CD8-positive, alpha-beta T cell (primary cell): ENCODE measurements at regions of chr15 and their contacts with region 1.

Region 1: GRCh38 chr15:74842581-74843444 is at the start of gene ULK3:
- DNase-seq: peak; percentile 88 to 96 (median 92)
- ATAC-seq: peak; percentile 92
- H3K4me3 ChIP-seq: peak within 1 kb of the TSS; percentile 90 to 97
- H3K4me3 Mint-ChIP-seq: peak within 1 kb of the TSS; percentile 91
- H3K27ac ChIP-seq: peak within 1 kb of the TSS; percentile 72 to 78
- H3K27ac Mint-ChIP-seq: peak within 1 kb of the TSS; percentile 93
- H3K4me1 ChIP-seq: peaks cover 43% of the 10 kb centered on the region
- H3K4me1 Mint-ChIP-seq: peaks cover 48% of the 10 kb centered on the region
- H3K27me3 ChIP-seq: no peaks in the 10 kb centered on the region
- H3K27me3 Mint-ChIP-seq: no peaks in the 10 kb centered on the region
- CTCF ChIP-seq: peak; percentile 71
- total RNA-seq, gene ULK3: 34.3 to 35.1 TPM

Region 2: GRCh38 chr15:74422650-74423430 is 420.0 kb before region 1 on chr15:
- CTCF ChIA-PET with region 1: no interaction called
- POLR2A ChIA-PET with region 1: no interaction called
- intact Hi-C with region 1: no loop called
- DNase-seq: no peak
- ATAC-seq: no peak
- H3K4me3 ChIP-seq: no peak overlapping the region
- H3K4me3 Mint-ChIP-seq: no peak overlapping the region
- H3K27ac ChIP-seq: no peak overlapping the region
- H3K27ac Mint-ChIP-seq: no peak overlapping the region
- H3K4me1 ChIP-seq: peaks cover 8% of the 10 kb centered on the region
- H3K4me1 Mint-ChIP-seq: peaks cover 23% of the 10 kb centered on the region
- H3K27me3 ChIP-seq: no peaks in the 10 kb centered on the region
- H3K27me3 Mint-ChIP-seq: no peaks in the 10 kb centered on the region
- CTCF ChIP-seq: no peak

Region 3: DNA sequence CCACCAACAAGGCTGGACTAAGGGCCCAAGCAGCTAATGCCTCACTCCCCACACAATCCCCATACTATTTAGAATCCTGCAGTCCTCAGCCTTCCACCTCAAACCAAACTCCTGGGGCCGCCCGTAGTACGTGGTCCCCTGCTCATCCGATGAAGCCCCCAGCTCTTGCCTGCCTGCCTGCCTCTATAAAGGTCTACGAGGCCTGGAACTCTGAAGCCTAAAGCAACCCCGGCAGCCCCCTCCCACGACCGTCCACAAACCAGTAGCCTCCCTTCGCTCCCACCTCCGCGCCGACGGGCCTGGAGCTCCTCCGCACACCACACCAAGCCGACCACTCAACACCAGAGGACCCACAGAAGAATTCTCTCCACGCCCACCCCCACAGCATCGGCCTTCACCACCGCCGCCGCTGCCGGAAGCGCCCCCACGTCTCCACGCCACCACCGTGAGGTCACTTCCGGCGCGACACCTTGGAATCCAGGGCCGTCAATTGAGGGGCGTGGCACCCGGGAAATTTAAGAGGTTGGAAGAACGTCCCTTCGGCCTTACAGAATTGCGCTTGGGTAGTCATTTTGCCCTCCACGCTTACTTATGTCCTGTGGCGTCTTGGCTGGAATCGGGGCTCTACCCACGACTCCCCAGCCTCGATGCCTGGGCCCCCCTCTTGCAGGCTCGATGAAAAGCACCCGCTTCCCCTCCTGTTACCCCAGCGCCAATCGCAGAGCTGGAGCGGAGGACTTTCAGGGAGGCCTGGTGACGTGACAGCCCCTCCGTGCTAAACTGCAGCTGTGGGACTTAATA is 147.0 kb before region 1 on chr15 and contains the start of gene EDC3:
- CTCF ChIA-PET with region 1: no interaction called
- POLR2A ChIA-PET with region 1: no interaction called
- intact Hi-C with region 1: loop called in 1 of 2 experiments (anchors 2 kb)
- DNase-seq: peak; percentile 72 to 94 (median 89)
- ATAC-seq: peak; percentile 88
- H3K4me3 ChIP-seq: peak within 1 kb of the TSS; percentile 79 to 93
- H3K4me3 Mint-ChIP-seq: peak within 1 kb of the TSS; percentile 100
- H3K27ac ChIP-seq: peak within 1 kb of the TSS; percentile 80 to 83
- H3K27ac Mint-ChIP-seq: peak within 1 kb of the TSS; percentile 99
- H3K4me1 ChIP-seq: peaks cover 14% of the 10 kb centered on the region
- H3K4me1 Mint-ChIP-seq: peaks cover 47% of the 10 kb centered on the region
- H3K27me3 ChIP-seq: peaks cover 0 to 1% of the 10 kb centered on the region in 2 experiments
- H3K27me3 Mint-ChIP-seq: no peaks in the 10 kb centered on the region
- CTCF ChIP-seq: no peak
- total RNA-seq, gene EDC3: 9.8 to 11.8 TPM

Region 4: DNA sequence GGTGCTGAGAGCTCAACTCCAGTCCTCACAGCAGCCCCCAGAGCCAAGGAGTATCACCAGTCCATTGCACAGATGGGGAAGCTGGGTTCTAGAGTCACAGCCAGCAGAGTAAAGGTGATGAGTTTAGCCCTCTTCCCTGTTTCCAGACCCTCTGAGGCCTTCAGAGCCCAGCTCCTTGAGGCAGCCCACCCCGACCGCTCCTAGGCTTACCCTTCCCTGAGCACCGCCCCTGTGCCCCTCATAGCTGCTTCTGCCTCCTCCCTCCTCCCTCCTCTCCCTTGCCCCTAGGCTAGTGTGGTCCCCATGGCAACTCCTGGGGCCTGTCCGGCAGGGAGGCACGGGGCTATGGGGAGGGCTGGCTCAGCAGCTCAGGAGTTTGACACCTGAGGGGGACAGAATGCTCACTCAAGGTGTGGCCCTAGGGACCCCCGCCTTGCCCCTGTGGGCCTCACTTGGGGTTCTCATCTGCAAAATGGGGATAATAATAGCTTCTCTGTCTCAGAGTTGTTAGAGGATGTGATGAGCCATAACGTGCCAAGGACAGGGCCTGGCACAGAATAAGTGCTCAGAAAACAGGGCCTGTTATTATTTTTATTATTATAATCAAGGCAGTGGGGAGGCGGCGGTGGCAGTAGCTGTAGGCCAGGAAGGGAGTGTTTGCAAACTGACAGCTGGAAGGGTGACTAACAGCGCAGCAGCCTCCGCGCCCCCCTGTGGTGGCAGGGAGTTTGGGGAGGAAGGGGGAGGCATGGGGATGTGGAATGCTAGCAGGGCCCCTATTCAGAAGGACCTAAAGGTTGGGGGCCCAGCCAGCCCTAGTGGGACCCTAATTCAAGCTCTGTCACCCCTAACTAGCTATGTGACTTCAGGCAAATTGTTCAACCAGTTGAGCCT is 49.4 kb before region 1 on chr15:
- CTCF ChIA-PET with region 1: interaction called, 10 read pairs
- POLR2A ChIA-PET with region 1: interaction called, 4 read pairs
- intact Hi-C with region 1: no loop called
- DNase-seq: peak; percentile 60 to 88 (median 84)
- ATAC-seq: peak; percentile 51
- H3K4me3 ChIP-seq: peak overlapping the region; percentile 20 to 24
- H3K4me3 Mint-ChIP-seq: peak overlapping the region; percentile 69
- H3K27ac ChIP-seq: peak overlapping the region in 1 of 2 experiments; percentile 72
- H3K27ac Mint-ChIP-seq: peak overlapping the region; percentile 91
- H3K4me1 ChIP-seq: peaks cover 98% of the 10 kb centered on the region
- H3K4me1 Mint-ChIP-seq: peaks cover 89% of the 10 kb centered on the region
- H3K27me3 ChIP-seq: no peaks in the 10 kb centered on the region
- H3K27me3 Mint-ChIP-seq: no peaks in the 10 kb centered on the region
- CTCF ChIP-seq: peak; percentile 66

Region 5: DNA sequence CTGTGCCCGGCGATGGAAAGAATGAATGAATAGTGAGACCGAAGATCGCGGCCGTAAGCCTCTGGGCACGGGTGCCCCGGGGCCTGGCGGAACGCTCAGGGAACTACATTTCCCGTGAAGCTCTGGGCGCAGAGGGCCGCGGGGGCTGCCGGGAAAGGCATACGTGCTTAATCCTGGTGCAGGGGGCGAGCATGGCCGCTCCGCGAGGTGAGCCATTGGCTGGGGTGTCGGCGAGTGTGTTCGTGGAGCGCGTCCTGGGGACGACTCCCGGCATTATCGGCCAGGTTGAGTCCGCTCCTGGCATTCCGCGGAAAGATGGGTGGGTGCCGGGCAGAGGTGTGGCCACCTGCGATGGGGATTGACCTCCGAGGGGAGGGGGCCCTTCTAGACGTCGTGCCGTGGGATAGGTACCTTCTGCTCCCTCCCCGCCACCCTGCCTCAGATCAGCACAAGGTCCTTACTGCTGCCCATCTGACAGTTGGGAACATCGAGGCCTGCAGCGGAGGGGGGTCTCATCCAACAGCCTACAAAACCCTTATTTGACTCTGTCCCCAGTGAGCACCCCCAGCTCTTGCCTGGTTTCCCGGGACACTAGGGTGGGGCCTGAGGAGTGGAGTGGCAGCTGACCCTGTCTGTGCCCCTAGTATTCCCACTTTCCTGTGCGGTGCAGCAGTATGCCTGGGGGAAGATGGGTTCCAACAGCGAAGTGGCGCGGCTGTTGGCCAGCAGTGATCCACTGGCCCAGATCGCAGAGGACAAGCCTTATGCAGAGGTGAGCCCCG is 47.3 kb after region 1 on chr15 and contains the start of gene MPI:
- CTCF ChIA-PET with region 1: interaction called, 3 read pairs
- POLR2A ChIA-PET with region 1: interaction called, 8 read pairs
- intact Hi-C with region 1: loop called (anchors 1 kb)
- DNase-seq: peak; percentile 66 to 89 (median 83)
- ATAC-seq: peak; percentile 95
- H3K4me3 ChIP-seq: peak within 1 kb of the TSS; percentile 80 to 82
- H3K4me3 Mint-ChIP-seq: peak within 1 kb of the TSS; percentile 92
- H3K27ac ChIP-seq: peak within 1 kb of the TSS; percentile 79
- H3K27ac Mint-ChIP-seq: peak within 1 kb of the TSS; percentile 88
- H3K4me1 ChIP-seq: peaks cover 39% of the 10 kb centered on the region
- H3K4me1 Mint-ChIP-seq: peaks cover 46% of the 10 kb centered on the region
- H3K27me3 ChIP-seq: no peaks in the 10 kb centered on the region
- H3K27me3 Mint-ChIP-seq: no peaks in the 10 kb centered on the region
- CTCF ChIP-seq: no peak
- total RNA-seq, gene MPI: 18.3 to 19.9 TPM

Region 6: DNA sequence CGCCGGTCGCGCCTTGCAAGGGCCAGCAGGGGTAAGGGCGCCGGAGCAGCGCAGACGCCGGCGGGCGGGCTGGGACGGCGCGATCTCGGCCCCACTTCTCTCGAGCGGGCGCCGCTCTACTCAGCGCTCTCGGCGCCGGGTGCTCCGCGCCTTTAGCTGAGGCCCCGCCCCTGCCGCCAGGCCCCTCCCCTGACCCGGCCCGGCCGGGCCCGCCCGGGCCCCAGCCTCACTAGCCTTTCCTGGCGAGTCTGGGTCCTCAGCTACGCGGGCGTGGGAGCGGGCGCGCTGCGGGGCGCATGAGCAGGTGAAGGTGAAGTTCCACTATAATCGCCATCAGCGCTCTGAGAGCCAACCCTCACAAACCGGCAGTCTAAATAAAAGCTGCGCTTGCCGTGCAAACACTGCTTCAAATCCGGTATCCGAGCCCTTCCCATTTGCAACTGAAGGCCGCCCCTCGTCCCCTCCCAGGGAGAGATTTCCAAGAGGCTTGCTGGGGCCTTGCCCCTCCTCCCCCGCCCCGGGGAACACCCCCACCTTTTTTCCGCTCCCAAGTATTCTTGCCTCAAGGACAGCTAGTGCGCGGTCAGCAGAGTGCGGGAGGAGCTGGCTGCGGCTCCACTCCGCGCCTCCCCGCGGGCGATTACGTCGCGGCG is 114.0 kb after region 1 on chr15 and contains the start of gene RPP25:
- CTCF ChIA-PET with region 1: interaction called, 23 read pairs
- POLR2A ChIA-PET with region 1: no interaction called
- intact Hi-C with region 1: loop called (anchors 1 to 2 kb)
- DNase-seq: peak; percentile 22 to 78 (median 66)
- ATAC-seq: peak; percentile 89
- H3K4me3 ChIP-seq: peak within 1 kb of the TSS; percentile 56 to 65
- H3K4me3 Mint-ChIP-seq: peak within 1 kb of the TSS; percentile 81
- H3K27ac ChIP-seq: no peak within 1 kb of the TSS
- H3K27ac Mint-ChIP-seq: no peak within 1 kb of the TSS
- H3K4me1 ChIP-seq: peaks cover 26% of the 10 kb centered on the region
- H3K4me1 Mint-ChIP-seq: peaks cover 30% of the 10 kb centered on the region
- H3K27me3 ChIP-seq: peaks cover 17 to 28% of the 10 kb centered on the region in 2 experiments
- H3K27me3 Mint-ChIP-seq: peaks cover 25% of the 10 kb centered on the region
- CTCF ChIP-seq: no peak
- total RNA-seq, gene RPP25: 0.22 to 0.28 TPM

Region 7: GRCh38 chr15:75008629-75009326 is 166.0 kb after region 1 on chr15:
- CTCF ChIA-PET with region 1: no interaction called
- POLR2A ChIA-PET with region 1: no interaction called
- intact Hi-C with region 1: no loop called
- DNase-seq: no peak
- ATAC-seq: no peak
- H3K4me3 ChIP-seq: no peak overlapping the region
- H3K4me3 Mint-ChIP-seq: no peak overlapping the region
- H3K27ac ChIP-seq: no peak overlapping the region
- H3K27ac Mint-ChIP-seq: no peak overlapping the region
- H3K4me1 ChIP-seq: no peaks in the 10 kb centered on the region
- H3K4me1 Mint-ChIP-seq: no peaks in the 10 kb centered on the region
- H3K27me3 ChIP-seq: peaks cover 0 to 2% of the 10 kb centered on the region in 2 experiments
- H3K27me3 Mint-ChIP-seq: peaks cover 4% of the 10 kb centered on the region
- CTCF ChIP-seq: no peak

Region 8: GRCh38 chr15:76150971-76151598 is 1308.3 kb after region 1 on chr15:
- CTCF ChIA-PET with region 1: no interaction called
- POLR2A ChIA-PET with region 1: no interaction called
- intact Hi-C with region 1: no loop called
- DNase-seq: peak; percentile 59 to 80 (median 72)
- ATAC-seq: peak; percentile 88
- H3K4me3 ChIP-seq: no peak overlapping the region
- H3K4me3 Mint-ChIP-seq: no peak overlapping the region
- H3K27ac ChIP-seq: no peak overlapping the region
- H3K27ac Mint-ChIP-seq: no peak overlapping the region
- H3K4me1 ChIP-seq: no peaks in the 10 kb centered on the region
- H3K4me1 Mint-ChIP-seq: peaks cover 13% of the 10 kb centered on the region
- H3K27me3 ChIP-seq: peaks cover 0 to 3% of the 10 kb centered on the region in 2 experiments
- H3K27me3 Mint-ChIP-seq: peaks cover 10% of the 10 kb centered on the region
- CTCF ChIP-seq: peak; percentile 81